ENCODE measurements at regions of chr16 and their contacts with region 1.

Region 1: GRCh38 chr16:1474796-1475551 is at the start of gene CLCN7:
- DNase-seq: peak; percentile 82
- ATAC-seq: peak; percentile 91
- H3K4me3 ChIP-seq: peak within 1 kb of the TSS; percentile 94
- H3K27ac ChIP-seq: peak within 1 kb of the TSS; percentile 83
- H3K4me1 ChIP-seq: 0 out of 2 replicates have a peak, but pooled peaks cover 7% of the 10 kb centered on the region
- H3K27me3 ChIP-seq: no peaks in the 10 kb centered on the region
- CTCF ChIP-seq: no peak
- POLR2A ChIP-seq: peak; percentile 85
- RAD21 ChIP-seq: no peak
- total RNA-seq, gene CLCN7: 10.8 TPM in 2 replicates

Region 2: GRCh38 chr16:1428511-1428910 is 46.5 kb before region 1 on chr16:
- CTCF ChIA-PET with region 1: no interaction called
- POLR2A ChIA-PET with region 1: no interaction called
- dilution Hi-C with region 1: no loop called
- in situ Hi-C with region 1: no loop called
- intact Hi-C with region 1: loop called (anchors 10 kb)
- DNase-seq: no peak
- ATAC-seq: no peak; the same call in 1 of the 2 replicates
- H3K4me3 ChIP-seq: no peak overlapping the region
- H3K27ac ChIP-seq: no peak overlapping the region
- H3K4me1 ChIP-seq: no peaks in the 10 kb centered on the region
- H3K27me3 ChIP-seq: peaks cover 7% of the 10 kb centered on the region; the same call in 1 of the 2 replicates
- CTCF ChIP-seq: peak; percentile 30; the same call in 1 of the 2 replicates
- POLR2A ChIP-seq: no peak
- RAD21 ChIP-seq: peak; percentile 26

Region 3: GRCh38 chr16:1786242-1787058 is 311.5 kb after region 1 on chr16:
- CTCF ChIA-PET with region 1: no interaction called
- POLR2A ChIA-PET with region 1: no interaction called
- dilution Hi-C with region 1: no loop called
- in situ Hi-C with region 1: no loop called
- intact Hi-C with region 1: no loop called
- DNase-seq: no peak
- ATAC-seq: no peak
- H3K4me3 ChIP-seq: no peak overlapping the region
- H3K27ac ChIP-seq: no peak overlapping the region
- H3K4me1 ChIP-seq: no peaks in the 10 kb centered on the region; the same call in 1 of the 2 replicates
- H3K27me3 ChIP-seq: no peaks in the 10 kb centered on the region
- CTCF ChIP-seq: no peak
- POLR2A ChIP-seq: no peak
- RAD21 ChIP-seq: no peak